GM12878 (cell line): ENCODE measurements at regions of chr5 and their contacts with region 1.

Region 1: GRCh38 chr5:173917788-173918786 is 29.9 kb downstream of the CPEB4 start:
- DNase-seq: peak; percentile 86
- ATAC-seq: peak; percentile 93
- H3K4me3 ChIP-seq: peak overlapping the region; percentile 77
- H3K27ac ChIP-seq: peak overlapping the region; percentile 76
- H3K4me1 ChIP-seq: peaks cover 18% of the 10 kb centered on the region
- H3K27me3 ChIP-seq: no peaks in the 10 kb centered on the region
- CTCF ChIP-seq: peak in 2 of 3 experiments; percentile 9 to 42; a peak in 2 of 6 replicates
- EP300 ChIP-seq: no peak
- POLR2A ChIP-seq: peak; percentile 85
- RAD21 ChIP-seq: peak; percentile 47

Region 2: GRCh38 chr5:173895401-173896165 is 22.5 kb before region 1 on chr5:
- CTCF ChIA-PET with region 1: interaction called, 104 read pairs
- POLR2A ChIA-PET with region 1: interaction called, 94 read pairs
- RAD21 ChIA-PET with region 1: interaction called, 142 read pairs
- SMC1A ChIA-PET with region 1: interaction called, 361 read pairs
- in situ Hi-C with region 1: no loop called
- intact Hi-C with region 1: loop called (anchors 2 kb)
- DNase-seq: no peak
- ATAC-seq: peak; percentile 1; the same call in 1 of the 3 replicates
- H3K4me3 ChIP-seq: peak overlapping the region; percentile 54
- H3K27ac ChIP-seq: peak overlapping the region; percentile 65
- H3K4me1 ChIP-seq: peaks cover 3% of the 10 kb centered on the region; the same call in 1 of the 2 replicates
- H3K27me3 ChIP-seq: no peaks in the 10 kb centered on the region
- CTCF ChIP-seq: no peak
- EP300 ChIP-seq: no peak
- POLR2A ChIP-seq: no peak
- RAD21 ChIP-seq: no peak

Region 3: GRCh38 chr5:173902743-173903142 is 15.3 kb before region 1 on chr5:
- CTCF ChIA-PET with region 1: interaction called, 46 read pairs
- POLR2A ChIA-PET with region 1: interaction called, 94 read pairs
- RAD21 ChIA-PET with region 1: interaction called, 142 read pairs
- SMC1A ChIA-PET with region 1: interaction called, 361 read pairs
- in situ Hi-C with region 1: no loop called
- intact Hi-C with region 1: loop called (anchors 2 kb)
- DNase-seq: no peak
- ATAC-seq: no peak
- H3K4me3 ChIP-seq: 0 out of 2 replicates have a peak overlapping the region, but pooled peaks have one; percentile 0
- H3K27ac ChIP-seq: peak overlapping the region; percentile 59
- H3K4me1 ChIP-seq: peaks cover 28% of the 10 kb centered on the region
- H3K27me3 ChIP-seq: no peaks in the 10 kb centered on the region
- CTCF ChIP-seq: no peak
- EP300 ChIP-seq: no peak
- POLR2A ChIP-seq: no peak
- RAD21 ChIP-seq: no peak

Region 4: DNA sequence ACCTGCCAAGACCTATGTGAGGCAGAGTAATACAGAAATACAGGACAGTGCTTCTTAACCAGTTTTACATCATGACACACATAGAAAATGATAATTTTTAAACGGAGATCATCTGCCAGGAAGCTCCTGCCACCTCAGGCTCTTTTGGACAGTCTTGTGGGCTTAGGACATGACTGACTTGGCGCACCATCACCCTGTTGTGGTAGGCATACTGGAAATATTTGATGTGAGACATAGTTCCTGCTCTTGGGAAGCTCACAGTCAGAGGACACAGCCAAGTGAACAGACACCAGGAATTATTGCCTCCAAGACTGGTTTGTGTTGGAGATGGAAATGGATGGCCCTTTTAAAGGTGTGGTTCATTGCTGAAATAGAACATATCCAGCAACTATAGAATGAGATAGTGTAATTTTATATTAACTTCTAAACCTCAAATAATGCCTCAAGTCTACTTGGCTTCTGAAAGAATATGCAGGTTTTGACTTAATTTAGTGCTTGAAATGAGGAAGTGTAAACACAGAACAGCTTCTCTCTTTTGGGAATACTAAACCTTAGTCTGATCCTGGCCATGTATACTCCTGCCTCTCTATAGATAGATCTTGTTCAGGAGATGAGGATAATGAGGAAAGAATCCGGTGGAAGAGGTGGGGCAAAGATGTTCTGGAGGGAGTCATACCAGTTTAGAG is 10.3 kb before region 1 on chr5:
- CTCF ChIA-PET with region 1: interaction called, 71 read pairs
- POLR2A ChIA-PET with region 1: interaction called, 94 read pairs
- RAD21 ChIA-PET with region 1: interaction called, 27 read pairs
- SMC1A ChIA-PET with region 1: interaction called, 361 read pairs
- in situ Hi-C with region 1: no loop called
- intact Hi-C with region 1: no loop called
- DNase-seq: no peak
- ATAC-seq: peak; percentile 38
- H3K4me3 ChIP-seq: no peak overlapping the region
- H3K27ac ChIP-seq: peak overlapping the region; percentile 60
- H3K4me1 ChIP-seq: peaks cover 31% of the 10 kb centered on the region
- H3K27me3 ChIP-seq: no peaks in the 10 kb centered on the region
- CTCF ChIP-seq: no peak
- EP300 ChIP-seq: no peak
- POLR2A ChIP-seq: no peak
- RAD21 ChIP-seq: no peak